ENCODE measurements at regions of chr1 and their contacts with region 1.

Region 1: GRCh38 chr1:9004700-9005394 is 21.4 kb downstream of the SLC2A7 start:
- DNase-seq: peak; percentile 53 to 97
- H3K4me3 ChIP-seq: no peak overlapping the region
- H3K27ac ChIP-seq: no peak overlapping the region
- H3K4me1 ChIP-seq: peaks cover 0 to 2% (median 0%) of the 10 kb centered on the region in 4 experiments; a peak in 1 of 7 replicates
- H3K27me3 ChIP-seq: no peaks in the 10 kb centered on the region
- CTCF ChIP-seq: peak; percentile 88 to 94 (median 93)
- EP300 ChIP-seq: no peak
- POLR2A ChIP-seq: no peak
- RAD21 ChIP-seq: peak; percentile 85 to 88

Region 2: DNA sequence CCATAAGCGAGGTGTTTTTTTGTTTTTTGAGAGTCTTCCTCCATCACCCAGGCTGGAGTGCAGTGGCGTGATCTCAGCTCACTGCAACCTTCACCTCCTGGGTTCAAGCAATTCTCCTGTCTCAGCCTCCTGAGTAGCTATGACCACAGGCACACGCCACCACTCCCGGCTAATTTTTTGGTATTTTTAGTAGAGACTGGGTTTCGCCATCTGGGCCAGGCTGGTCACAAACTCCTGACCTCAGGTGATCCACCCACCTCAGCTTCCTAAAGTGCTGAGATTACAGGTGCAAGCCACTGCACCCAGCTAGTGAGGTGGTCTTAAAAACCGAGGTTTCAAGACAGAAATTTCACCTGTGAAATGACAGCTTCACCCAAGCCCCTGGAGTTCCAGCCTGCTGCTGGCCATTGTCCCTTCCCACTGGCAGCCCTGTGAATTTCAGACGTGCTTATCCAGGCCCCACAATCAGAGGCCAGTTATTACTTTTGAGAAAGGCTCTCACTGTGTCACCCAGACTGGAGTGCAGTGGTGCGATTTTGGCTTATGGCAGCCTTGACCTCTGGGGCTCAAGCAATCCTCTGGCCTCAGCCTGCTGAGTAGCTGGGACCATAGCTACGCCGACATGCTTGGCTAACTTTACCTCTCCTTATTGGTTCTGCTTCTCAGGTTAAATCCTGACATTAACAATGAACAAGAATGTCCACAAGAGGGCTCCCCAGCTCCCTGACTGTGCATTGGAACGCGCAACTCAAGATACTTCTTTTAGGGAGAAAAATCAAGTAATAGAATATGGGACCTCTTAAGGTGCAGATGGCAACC is 145.8 kb before region 1 on chr1:
- CTCF ChIA-PET with region 1: interaction called, 25 read pairs
- POLR2A ChIA-PET with region 1: interaction called, 9 read pairs
- DNase-seq: no peak
- H3K4me3 ChIP-seq: no peak overlapping the region
- H3K27ac ChIP-seq: no peak overlapping the region
- H3K4me1 ChIP-seq: peaks cover 2 to 6% (median 3%) of the 10 kb centered on the region in 4 experiments; a peak in 6 of 7 replicates
- H3K27me3 ChIP-seq: no peaks in the 10 kb centered on the region
- CTCF ChIP-seq: peak in 2 of 3 experiments; percentile 61 to 72; a peak in 3 of 4 replicates
- EP300 ChIP-seq: no peak
- POLR2A ChIP-seq: peak; percentile 23 to 31; a peak in 2 of 3 replicates
- RAD21 ChIP-seq: peak; percentile 48 to 62; a peak in 3 of 4 replicates

Region 3: DNA sequence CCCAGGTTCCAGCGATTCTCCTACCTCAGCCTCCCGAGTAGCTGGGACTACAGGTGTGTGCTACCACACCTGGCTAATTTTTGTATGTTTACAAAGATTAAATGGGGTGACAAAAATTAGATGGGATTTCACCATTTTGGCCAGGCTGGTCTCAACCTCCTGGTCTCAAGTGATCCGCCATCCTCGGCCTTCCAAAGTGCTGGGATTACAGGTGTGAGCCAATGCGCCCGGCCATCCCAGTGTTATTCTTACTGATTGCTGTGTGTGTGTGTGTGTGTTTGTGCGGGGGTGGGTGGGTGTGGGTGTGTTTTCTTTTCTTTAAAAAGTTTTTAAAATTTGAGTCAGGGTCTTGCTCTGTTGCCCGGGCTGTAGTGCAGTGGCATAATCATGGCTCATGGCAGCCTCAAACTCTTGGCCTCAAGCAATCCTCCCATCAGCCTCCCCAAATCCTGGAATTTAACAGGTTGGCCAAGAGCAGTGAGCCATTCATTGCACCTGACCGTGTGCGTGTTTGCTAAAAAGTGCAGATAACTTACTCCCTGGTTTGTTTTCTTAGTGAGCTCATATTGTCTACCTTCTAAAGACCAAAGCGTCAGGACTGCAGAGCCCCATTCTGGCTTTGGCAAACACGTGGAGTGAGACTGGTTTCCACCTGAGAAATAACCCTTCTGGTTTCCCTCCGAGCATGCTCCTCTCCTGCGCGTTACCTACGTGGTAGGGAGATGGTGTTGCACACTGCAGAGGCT is 91.6 kb before region 1 on chr1:
- CTCF ChIA-PET with region 1: interaction called, 21 read pairs
- POLR2A ChIA-PET with region 1: interaction called, 6 read pairs
- DNase-seq: no peak
- H3K4me3 ChIP-seq: no peak overlapping the region
- H3K27ac ChIP-seq: no peak overlapping the region
- H3K4me1 ChIP-seq: peaks cover 0 to 11% (median 7%) of the 10 kb centered on the region in 4 experiments; a peak in 5 of 7 replicates
- H3K27me3 ChIP-seq: no peaks in the 10 kb centered on the region
- CTCF ChIP-seq: no peak
- EP300 ChIP-seq: no peak
- POLR2A ChIP-seq: no peak
- RAD21 ChIP-seq: no peak

Region 4: GRCh38 chr1:8955406-8955805 is 49.4 kb before region 1 on chr1:
- CTCF ChIA-PET with region 1: interaction called, 14 read pairs
- POLR2A ChIA-PET with region 1: no interaction called
- DNase-seq: no peak
- H3K4me3 ChIP-seq: no peak overlapping the region
- H3K27ac ChIP-seq: no peak overlapping the region
- H3K4me1 ChIP-seq: peaks cover 0 to 3% (median 1%) of the 10 kb centered on the region in 4 experiments; a peak in 1 of 7 replicates
- H3K27me3 ChIP-seq: no peaks in the 10 kb centered on the region; a peak in 1 of 7 replicates
- CTCF ChIP-seq: no peak
- EP300 ChIP-seq: no peak
- POLR2A ChIP-seq: no peak
- RAD21 ChIP-seq: no peak

Region 5: DNA sequence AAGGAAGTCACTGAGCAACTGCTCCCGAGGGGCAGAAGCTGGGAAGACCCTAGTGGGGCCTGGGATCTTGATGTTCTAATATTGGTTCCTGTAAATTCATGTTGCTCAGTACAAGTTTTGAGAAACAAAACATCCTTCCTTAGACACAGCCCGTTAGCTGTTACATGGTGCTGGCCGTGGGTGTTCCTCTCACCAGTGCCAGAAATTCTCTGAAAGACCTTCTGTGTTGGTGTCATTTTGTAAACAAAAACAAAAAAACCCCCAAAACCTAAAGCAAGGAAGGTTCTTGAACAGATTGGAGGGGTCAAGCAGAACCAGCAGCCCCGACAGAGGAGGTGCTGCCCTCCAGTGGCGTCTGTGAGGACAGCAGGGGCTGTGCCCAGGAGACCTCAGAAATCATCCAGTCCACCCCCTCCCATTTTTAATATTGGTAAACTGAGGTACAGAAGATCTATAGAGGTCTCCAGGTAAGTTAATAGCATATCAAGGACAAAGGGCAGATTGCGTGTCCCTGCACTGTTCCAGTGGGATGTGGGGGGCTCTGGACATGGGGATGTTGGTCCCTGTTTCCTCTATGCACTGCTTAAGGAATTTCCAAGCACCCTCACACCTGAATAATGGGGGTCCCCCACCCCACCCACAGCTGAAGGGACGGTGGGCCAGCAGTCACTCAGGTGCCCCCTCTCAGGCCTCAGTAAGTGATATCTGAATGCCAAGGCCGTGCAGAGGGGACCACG is 16.8 kb before region 1 on chr1:
- CTCF ChIA-PET with region 1: interaction called, 45 read pairs
- POLR2A ChIA-PET with region 1: interaction called, 3 read pairs
- DNase-seq: peak in 1 of 2 experiments; percentile 95
- H3K4me3 ChIP-seq: no peak overlapping the region
- H3K27ac ChIP-seq: no peak overlapping the region
- H3K4me1 ChIP-seq: peaks cover 0 to 2% (median 0%) of the 10 kb centered on the region in 4 experiments; a peak in 2 of 7 replicates
- H3K27me3 ChIP-seq: no peaks in the 10 kb centered on the region
- CTCF ChIP-seq: peak; percentile 89 to 95 (median 94)
- EP300 ChIP-seq: no peak
- POLR2A ChIP-seq: no peak
- RAD21 ChIP-seq: peak; percentile 83 to 93

Region 6: GRCh38 chr1:9101510-9102146 is 96.8 kb after region 1 on chr1:
- CTCF ChIA-PET with region 1: interaction called, 156 read pairs
- POLR2A ChIA-PET with region 1: interaction called, 26 read pairs
- DNase-seq: peak; percentile 17 to 68
- H3K4me3 ChIP-seq: no peak overlapping the region
- H3K27ac ChIP-seq: no peak overlapping the region
- H3K4me1 ChIP-seq: peaks cover 0 to 2% (median 0%) of the 10 kb centered on the region in 4 experiments; a peak in 3 of 7 replicates
- H3K27me3 ChIP-seq: no peaks in the 10 kb centered on the region
- CTCF ChIP-seq: peak; percentile 81 to 86 (median 85)
- EP300 ChIP-seq: no peak
- POLR2A ChIP-seq: no peak
- RAD21 ChIP-seq: peak; percentile 90

Region 7: DNA sequence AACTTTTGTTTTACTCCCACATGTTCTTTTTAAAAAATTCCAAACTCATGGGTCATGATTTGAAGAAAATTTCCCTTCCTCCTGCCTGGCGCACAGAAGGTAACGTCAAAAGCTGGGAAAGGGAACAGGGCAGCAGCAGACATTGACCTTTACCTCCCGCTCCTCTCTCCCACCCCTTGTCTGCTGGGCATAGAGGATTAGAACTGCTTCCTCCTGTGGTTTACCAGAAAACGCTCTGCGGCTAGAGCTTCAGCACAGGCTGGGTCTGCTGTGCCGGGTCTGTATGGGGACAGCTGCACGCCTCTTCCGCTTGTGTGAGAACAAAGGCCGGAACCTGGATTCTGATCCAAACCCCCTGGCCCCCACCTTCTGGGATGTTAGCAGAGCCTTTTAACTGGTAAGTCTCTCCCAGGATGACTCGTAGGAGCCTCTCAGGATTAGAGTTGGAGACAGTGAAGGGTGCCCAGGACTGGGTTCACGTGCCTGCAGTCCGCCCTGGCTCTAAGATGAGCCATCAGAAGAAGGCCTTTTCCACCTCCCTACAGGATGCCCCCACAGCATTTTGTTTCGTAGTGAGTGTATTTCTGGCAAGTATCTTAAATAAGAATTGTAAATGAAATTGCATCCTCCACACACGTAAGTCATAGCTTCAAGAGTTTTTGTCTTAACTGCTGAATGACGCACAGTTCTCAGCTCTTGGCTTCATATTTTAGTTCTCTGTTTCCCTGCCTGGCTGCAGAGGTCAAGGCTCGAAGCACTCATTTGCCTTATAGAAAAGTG is 235.0 kb after region 1 on chr1:
- CTCF ChIA-PET with region 1: no interaction called
- POLR2A ChIA-PET with region 1: no interaction called
- DNase-seq: no peak
- H3K4me3 ChIP-seq: no peak overlapping the region
- H3K27ac ChIP-seq: no peak overlapping the region
- H3K4me1 ChIP-seq: peaks cover 5 to 16% (median 12%) of the 10 kb centered on the region in 4 experiments; a peak in 6 of 7 replicates
- H3K27me3 ChIP-seq: no peaks in the 10 kb centered on the region
- CTCF ChIP-seq: no peak
- EP300 ChIP-seq: no peak
- POLR2A ChIP-seq: no peak
- RAD21 ChIP-seq: no peak

Measured in H1 (cell line).